Ascending aorta (tissue), 2 donors: ENCODE measurements at regions of chr11 and their contacts with region 1.

Region 1: GRCh38 chr11:57761301-57762234 is at the start of gene CTNND1:
- DNase-seq: peak; percentile 68 to 95
- H3K4me3 ChIP-seq: peak within 1 kb of the TSS; percentile 66 to 79
- H3K27ac ChIP-seq: peak within 1 kb of the TSS; percentile 87 to 96
- H3K4me1 ChIP-seq: peaks cover 0 to 21% of the 10 kb centered on the region in 2 donors
- H3K27me3 ChIP-seq: no peaks in the 10 kb centered on the region
- CTCF ChIP-seq: no peak
- total RNA-seq, gene CTNND1: 69.5 TPM

Region 2: GRCh38 chr11:57741132-57742086 is 20.2 kb before region 1 on chr11 and contains the start of gene SELENOH:
- intact Hi-C with region 1: loop called (anchors 1 kb)
- DNase-seq: peak; percentile 84 to 98
- H3K4me3 ChIP-seq: peak within 1 kb of the TSS; percentile 91 to 93
- H3K27ac ChIP-seq: peak within 1 kb of the TSS; percentile 95 to 97
- H3K4me1 ChIP-seq: peaks cover 0 to 15% of the 10 kb centered on the region in 2 donors
- H3K27me3 ChIP-seq: no peaks in the 10 kb centered on the region
- CTCF ChIP-seq: no peak
- total RNA-seq, gene SELENOH: 113 TPM

Region 3: DNA sequence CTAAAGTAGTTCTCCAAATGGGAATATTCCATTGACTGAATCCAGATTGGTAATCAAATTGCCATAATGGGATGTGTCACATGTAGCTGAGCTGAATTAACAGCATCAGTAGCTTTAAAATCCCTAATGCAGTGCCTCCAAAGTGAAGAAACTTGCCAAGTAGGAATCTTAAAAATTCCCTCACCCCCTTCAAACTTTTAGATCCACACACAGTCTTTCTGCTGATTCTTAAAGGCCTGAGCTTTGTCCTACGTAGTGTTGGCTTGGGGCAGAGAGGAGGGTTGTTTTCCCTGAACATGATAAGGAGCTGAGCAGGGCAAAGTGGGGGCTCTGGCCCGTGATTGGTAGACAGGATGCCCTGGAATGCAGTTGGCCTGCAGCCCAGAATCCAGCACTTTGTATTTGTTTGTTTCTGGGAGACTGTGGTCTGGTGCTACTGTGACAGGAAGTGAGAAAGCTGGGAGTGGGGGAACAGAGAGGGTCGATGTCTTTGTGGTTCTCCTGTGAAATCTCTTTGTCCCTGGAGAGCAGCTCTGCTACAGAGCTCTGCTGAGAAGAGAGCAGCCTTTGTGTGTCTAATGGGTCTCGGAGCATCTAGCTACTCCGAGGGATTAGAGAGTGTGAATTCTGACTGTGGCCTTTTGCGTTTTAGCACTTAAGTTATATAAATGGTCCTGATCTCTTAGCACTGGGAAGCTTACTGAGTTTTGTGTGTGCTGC is 16.9 kb after region 1 on chr11:
- intact Hi-C with region 1: loop called (anchors 2 kb)
- DNase-seq: peak in 1 of 2 donors; percentile 94
- H3K4me3 ChIP-seq: peak overlapping the region; percentile 27 to 51
- H3K27ac ChIP-seq: peak overlapping the region; percentile 86 to 87
- H3K4me1 ChIP-seq: peaks cover 14 to 68% of the 10 kb centered on the region in 2 donors
- H3K27me3 ChIP-seq: no peaks in the 10 kb centered on the region
- CTCF ChIP-seq: no peak

Region 4: DNA sequence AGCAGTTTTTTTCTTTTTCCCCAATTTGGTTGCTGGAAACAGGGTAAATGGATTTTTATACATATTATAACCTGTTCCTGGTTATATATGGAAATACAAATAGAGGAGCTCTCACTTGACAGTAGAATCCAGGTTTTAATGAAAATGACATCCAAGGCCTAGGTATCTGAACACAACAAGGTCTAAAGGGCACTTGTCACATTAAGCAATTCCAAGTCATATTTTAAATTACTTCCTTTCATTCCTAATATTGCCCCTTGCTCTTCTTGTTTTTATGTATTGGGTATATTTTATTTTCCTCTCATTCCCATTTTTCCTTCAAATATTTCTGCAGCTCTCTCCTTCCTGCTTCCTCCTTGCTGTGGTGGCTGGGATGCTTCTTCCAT is 27.1 kb after region 1 on chr11:
- intact Hi-C with region 1: no loop called
- DNase-seq: no peak
- H3K4me3 ChIP-seq: no peak overlapping the region
- H3K27ac ChIP-seq: no peak overlapping the region
- H3K4me1 ChIP-seq: peaks cover 0 to 38% of the 10 kb centered on the region in 2 donors
- H3K27me3 ChIP-seq: no peaks in the 10 kb centered on the region
- CTCF ChIP-seq: no peak

Region 5: DNA sequence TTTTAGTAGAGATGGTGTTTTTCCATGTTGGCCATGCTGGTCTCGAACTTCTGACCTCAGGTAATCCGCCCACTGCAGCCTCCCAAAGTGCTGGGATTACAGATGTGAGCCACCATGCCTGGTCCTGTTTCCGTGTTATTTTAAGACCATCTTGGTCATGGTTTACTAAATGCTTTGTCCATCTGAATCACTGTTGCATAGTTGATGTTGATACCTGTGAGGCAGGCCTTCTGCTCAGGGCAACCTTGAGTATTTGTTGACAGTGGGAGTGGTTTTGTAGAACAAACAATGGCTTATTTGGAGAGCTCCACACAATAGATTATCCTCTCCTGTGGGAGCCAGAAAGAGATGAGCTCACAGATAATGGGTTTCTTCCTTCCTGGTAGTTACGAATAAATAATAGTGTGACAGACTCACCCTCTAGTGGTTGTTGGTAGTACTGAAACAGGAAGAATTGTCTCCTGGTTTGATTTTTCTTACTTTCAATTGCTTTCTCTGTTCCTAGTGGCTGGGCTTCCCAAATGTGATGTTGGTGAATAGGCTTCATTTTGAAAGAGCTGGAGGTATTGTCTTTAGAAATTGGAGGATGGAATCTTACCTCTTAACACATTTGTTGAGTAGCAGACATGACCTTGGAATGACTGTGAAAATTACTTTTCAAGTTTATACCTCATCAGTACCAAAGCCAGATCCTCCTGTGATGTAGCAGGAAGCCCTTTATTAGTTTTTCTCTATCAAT is 39.0 kb after region 1 on chr11:
- intact Hi-C with region 1: loop called (anchors 2 kb)
- DNase-seq: no peak
- H3K4me3 ChIP-seq: no peak overlapping the region
- H3K27ac ChIP-seq: peak overlapping the region in 1 of 2 donors; percentile 37
- H3K4me1 ChIP-seq: peaks cover 3 to 10% of the 10 kb centered on the region in 2 donors
- H3K27me3 ChIP-seq: no peaks in the 10 kb centered on the region
- CTCF ChIP-seq: peak; percentile 75 to 78 (median 76)